ENCODE measurements at regions of chr7 and their contacts with region 1.

Region 1: GRCh38 chr7:16753102-16753931 is at the start of gene TSPAN13:
- DNase-seq: peak; percentile 86

Region 2: GRCh38 chr7:16619979-16620408 is 133.3 kb before region 1 on chr7:
- CTCF ChIA-PET with region 1: no interaction called
- POLR2A ChIA-PET with region 1: no interaction called
- DNase-seq: no peak

Region 3: DNA sequence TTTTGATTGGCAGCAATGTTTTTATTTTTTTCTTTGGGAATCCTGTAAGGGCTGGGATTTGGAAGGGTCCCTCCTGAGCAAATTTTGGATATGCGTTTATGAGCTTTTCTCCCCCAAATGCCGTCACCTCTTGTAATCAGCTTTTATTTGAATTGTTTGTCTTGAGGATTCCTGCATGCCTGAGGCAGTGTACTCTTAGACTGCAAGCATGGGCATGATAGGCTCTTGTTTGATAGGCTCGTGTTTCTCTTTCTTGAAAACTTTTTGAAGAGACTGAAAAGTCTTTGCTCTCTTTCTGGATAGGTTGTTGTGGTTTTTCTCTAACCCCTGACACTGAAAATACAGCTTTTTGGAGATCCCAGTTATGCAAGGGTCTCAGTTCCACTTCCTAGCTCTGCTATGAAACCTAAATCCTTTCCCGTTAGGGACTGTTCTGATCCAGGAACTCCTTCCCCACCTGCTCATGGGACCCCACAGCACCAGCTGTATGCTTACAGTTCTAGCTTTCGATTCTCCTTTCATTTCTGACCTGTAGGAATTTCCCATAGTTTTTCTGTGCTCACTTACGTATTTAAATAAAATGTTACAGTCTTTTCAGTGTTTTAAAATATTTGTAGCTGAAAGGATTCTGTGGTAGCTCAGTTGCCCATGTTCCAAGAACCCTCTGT is 17.5 kb after region 1 on chr7:
- CTCF ChIA-PET with region 1: no interaction called
- POLR2A ChIA-PET with region 1: interaction called, 10 read pairs
- DNase-seq: no peak

Measured in HEK293T (cell line).